Adrenal gland (tissue), 19 donors: ENCODE measurements at regions of chr11 and their contacts with region 1.

Region 1: GRCh38 chr11:9613118-9613829 is 39.8 kb downstream of the WEE1 start:
- DNase-seq: peak; percentile 93 to 98 (median 95)
- H3K4me3 ChIP-seq: peak overlapping the region in 1 of 4 donors; percentile 60
- H3K27ac ChIP-seq: peak overlapping the region; percentile 43 to 96 (median 93)
- H3K4me1 ChIP-seq: peaks cover 9 to 12% of the 10 kb centered on the region in 2 donors
- H3K27me3 ChIP-seq: no peaks in the 10 kb centered on the region
- CTCF ChIP-seq: peak; percentile 90 to 99 (median 95)
- POLR2A ChIP-seq: peak; percentile 55 to 86

Region 2: GRCh38 chr11:9534791-9535781 is 78.2 kb before region 1 on chr11:
- intact Hi-C with region 1: loop called in 1 of 2 experiments (anchors 10 kb)
- DNase-seq: peak; percentile 59 to 88 (median 72)
- H3K4me3 ChIP-seq: no peak overlapping the region
- H3K27ac ChIP-seq: peak overlapping the region in 1 of 5 donors; percentile 40
- H3K4me1 ChIP-seq: no peaks in the 10 kb centered on the region
- H3K27me3 ChIP-seq: no peaks in the 10 kb centered on the region
- CTCF ChIP-seq: peak; percentile 51 to 83 (median 76)
- POLR2A ChIP-seq: no peak

Region 3: DNA sequence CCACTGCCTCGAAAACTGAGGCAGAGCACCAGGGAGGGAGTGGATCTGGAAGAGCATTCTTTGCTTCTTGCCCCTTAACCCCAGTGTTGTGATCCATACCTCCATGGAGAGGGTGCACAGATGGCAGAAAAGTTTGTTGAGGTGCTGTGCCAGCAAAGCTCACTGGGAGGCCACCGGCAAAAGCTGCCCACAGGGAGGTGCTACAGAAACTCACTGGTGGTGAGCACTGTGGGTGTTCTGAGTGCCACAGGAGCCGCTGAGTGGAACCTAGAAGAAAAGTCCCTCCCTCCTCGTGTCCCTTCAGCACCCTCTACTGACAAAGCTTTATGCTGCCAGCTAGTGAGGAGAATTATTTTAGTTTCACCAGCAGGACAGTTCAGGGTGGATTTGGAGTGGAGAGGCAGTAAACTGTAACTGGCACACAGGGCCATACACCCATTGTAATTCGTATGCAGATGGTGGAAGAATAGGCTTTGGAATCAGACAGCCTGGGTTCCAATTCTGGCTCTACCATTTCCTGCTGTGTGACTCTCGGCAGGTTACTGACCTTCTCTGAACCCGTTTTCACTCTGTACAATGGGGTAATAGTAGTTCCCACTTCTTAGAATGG is 135.2 kb after region 1 on chr11:
- intact Hi-C with region 1: loop called (anchors 2 to 10 kb)
- DNase-seq: peak; percentile 44 to 83 (median 67)
- H3K4me3 ChIP-seq: no peak overlapping the region
- H3K27ac ChIP-seq: no peak overlapping the region
- H3K4me1 ChIP-seq: peaks cover 0 to 6% of the 10 kb centered on the region in 2 donors
- H3K27me3 ChIP-seq: no peaks in the 10 kb centered on the region
- CTCF ChIP-seq: peak; percentile 56 to 90 (median 75)
- POLR2A ChIP-seq: no peak

Region 4: DNA sequence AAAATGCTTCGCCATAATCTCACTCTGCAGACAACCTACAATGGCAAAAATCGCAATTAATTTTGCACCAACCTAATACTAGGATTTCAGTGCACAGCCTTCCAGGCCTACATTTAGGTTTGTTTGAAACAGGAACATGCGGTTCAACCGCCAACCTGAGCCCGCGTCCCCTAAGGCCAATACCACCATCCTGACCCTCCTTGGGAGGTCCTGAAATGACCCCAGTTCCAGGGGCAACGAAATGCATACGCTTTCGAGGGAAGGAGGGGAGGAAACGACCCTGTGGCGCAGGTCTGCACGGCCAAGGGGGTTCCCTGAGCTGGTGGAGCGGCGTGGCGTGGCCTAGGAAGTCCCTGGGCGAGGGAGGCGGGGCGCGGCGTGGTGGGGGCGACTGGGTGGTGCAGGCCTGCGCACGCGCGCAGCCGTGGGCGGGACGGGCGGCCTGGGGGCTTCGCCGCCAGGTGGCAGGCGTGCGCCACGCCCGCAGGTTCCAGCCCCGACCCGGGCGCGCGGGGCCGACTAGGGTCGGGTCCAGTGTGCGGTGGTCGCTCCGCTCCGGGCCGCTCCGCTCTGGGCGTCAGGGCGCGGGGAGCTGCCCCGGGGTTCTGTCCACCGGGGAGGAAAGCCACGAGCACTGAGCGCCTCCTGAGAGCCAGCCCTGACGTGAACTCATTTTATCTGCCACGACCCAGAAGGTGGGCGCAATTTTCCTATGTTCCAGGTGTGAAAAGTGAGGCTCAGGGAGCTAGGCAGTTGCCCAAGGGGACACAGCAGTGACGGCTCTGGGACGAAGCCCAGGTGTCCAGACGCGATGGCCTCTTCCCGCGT is 144.7 kb after region 1 on chr11:
- intact Hi-C with region 1: loop called in 1 of 2 experiments (anchors 10 kb)
- DNase-seq: peak; percentile 84 to 92 (median 88)
- H3K4me3 ChIP-seq: peak overlapping the region; percentile 28 to 86 (median 44)
- H3K27ac ChIP-seq: peak overlapping the region in 4 of 5 donors; percentile 64 to 84 (median 78)
- H3K4me1 ChIP-seq: peaks cover 12 to 23% of the 10 kb centered on the region in 2 donors
- H3K27me3 ChIP-seq: no peaks in the 10 kb centered on the region
- CTCF ChIP-seq: peak in 5 of 6 experiments; percentile 31 to 97 (median 96)
- POLR2A ChIP-seq: no peak